MCF 10A (cell line): ENCODE measurements at regions of chr9 and their contacts with region 1.

Region 1: DNA sequence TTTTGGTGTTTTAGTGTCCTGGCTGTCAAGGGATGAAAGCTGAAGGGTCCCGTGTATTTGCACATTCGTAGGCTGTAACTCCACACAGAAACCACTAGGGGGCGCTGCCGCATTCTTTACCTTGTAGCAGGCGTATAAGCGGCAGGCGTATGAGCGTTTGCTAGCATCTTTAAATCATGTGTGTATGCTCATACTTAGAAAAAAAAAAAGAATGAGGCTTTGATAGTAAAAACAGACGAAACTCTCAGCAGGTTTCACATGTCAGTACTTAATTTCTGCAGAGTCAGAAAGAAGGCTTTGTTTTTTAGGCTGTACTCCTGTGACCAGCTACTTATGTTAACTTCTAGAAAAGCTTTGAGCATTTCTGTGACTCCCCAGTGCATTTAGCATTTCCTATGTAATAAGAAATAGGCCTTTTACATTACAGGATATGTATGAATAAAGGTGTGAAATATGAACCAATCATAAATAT is 218.8 kb upstream of the ADAMTSL1 start:
- DNase-seq: peak; percentile 87
- H3K4me3 Mint-ChIP-seq: no peak overlapping the region
- H3K27ac Mint-ChIP-seq: no peak overlapping the region
- H3K4me1 Mint-ChIP-seq: peaks cover 6% of the 10 kb centered on the region
- H3K27me3 Mint-ChIP-seq: no peaks in the 10 kb centered on the region
- CTCF ChIP-seq: peak; percentile 91

Region 2: GRCh38 chr9:17863213-17863883 is 391.8 kb before region 1 on chr9:
- CTCF ChIA-PET with region 1: no interaction called
- POLR2A ChIA-PET with region 1: no interaction called
- intact Hi-C with region 1: no loop called
- DNase-seq: no peak
- H3K4me3 Mint-ChIP-seq: no peak overlapping the region
- H3K27ac Mint-ChIP-seq: no peak overlapping the region
- H3K4me1 Mint-ChIP-seq: no peaks in the 10 kb centered on the region
- H3K27me3 Mint-ChIP-seq: no peaks in the 10 kb centered on the region
- CTCF ChIP-seq: no peak

Region 3: DNA sequence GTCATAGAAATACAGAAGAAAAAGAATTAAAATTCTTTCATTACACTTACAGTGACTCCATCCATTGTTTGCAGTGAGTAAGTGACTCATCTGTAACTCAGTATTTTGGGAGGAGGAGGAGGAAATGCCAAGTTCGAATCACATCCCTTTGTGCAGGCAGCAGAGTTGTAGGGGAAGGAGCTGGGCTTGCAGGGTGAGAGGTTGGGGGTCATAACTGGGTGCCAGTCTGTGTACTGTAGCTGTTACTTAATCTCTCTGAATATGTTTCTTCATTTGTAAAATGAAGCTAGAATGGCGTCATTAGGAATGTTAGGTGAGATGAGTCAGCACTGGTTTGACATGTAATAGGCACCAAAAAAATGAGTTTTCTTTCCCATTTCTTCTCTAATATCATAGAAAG is 16.9 kb before region 1 on chr9:
- CTCF ChIA-PET with region 1: interaction called, 10 read pairs
- POLR2A ChIA-PET with region 1: interaction called, 4 read pairs
- intact Hi-C with region 1: no loop called
- DNase-seq: peak; percentile 93
- H3K4me3 Mint-ChIP-seq: peak overlapping the region; percentile 55
- H3K27ac Mint-ChIP-seq: peak overlapping the region; percentile 88
- H3K4me1 Mint-ChIP-seq: peaks cover 33% of the 10 kb centered on the region
- H3K27me3 Mint-ChIP-seq: no peaks in the 10 kb centered on the region
- CTCF ChIP-seq: no peak

Region 4: DNA sequence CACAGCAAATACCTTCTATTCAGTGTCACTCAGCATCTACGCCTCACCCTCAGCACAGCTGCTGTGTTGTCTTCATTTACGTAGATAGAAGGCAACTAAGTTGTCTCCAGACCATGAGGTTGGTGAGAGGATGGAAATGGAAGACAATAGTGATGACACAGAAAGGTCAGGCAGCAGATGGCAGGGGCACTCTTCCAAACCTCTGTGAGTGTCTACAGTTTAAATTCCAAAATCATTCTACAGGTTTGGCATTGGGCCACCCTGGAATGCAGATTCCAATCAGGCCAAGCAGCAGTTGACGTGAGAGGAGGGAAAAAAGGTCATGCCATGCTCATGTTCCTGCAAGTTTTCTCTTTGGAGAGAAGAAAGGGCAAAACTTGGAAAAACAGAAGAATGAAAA is 150.0 kb after region 1 on chr9:
- CTCF ChIA-PET with region 1: interaction called, 16 read pairs
- POLR2A ChIA-PET with region 1: no interaction called
- intact Hi-C with region 1: no loop called
- DNase-seq: peak; percentile 61
- H3K4me3 Mint-ChIP-seq: no peak overlapping the region
- H3K27ac Mint-ChIP-seq: no peak overlapping the region
- H3K4me1 Mint-ChIP-seq: peaks cover 15% of the 10 kb centered on the region
- H3K27me3 Mint-ChIP-seq: no peaks in the 10 kb centered on the region
- CTCF ChIP-seq: peak; percentile 13

Region 5: DNA sequence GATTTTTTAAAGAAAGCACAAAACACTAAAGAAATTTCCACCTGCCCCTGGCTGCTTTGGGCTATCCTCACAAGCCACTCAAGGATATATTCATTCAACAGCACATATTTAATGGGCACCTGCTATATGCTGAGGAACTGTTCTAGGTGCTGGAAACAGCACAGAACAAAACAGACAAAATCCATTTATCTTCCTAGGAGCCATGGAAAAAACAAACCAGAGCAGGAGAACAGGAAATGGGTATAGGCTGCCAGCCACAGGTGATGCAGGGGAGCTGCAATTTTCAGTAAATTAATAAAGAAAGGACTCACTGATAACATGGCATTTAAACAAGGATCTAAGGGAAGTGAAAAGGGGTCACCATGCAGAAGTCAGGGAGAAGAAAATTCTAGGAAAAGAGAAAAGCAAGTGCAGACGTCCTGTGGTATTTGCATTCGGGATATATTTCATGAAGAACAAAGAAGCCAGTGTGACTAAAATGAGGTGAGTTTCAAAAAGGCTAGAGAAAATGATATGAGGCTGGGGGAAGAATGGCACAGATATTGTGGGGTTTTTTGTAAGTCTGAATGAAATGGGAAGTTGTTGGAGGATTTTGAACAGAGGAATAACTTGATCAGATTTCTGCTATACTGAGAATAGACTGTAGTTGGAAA is 371.0 kb after region 1 on chr9:
- CTCF ChIA-PET with region 1: interaction called, 9 read pairs
- POLR2A ChIA-PET with region 1: no interaction called
- intact Hi-C with region 1: loop called (anchors 1 kb)
- DNase-seq: peak; percentile 12
- H3K4me3 Mint-ChIP-seq: no peak overlapping the region
- H3K27ac Mint-ChIP-seq: no peak overlapping the region
- H3K4me1 Mint-ChIP-seq: no peaks in the 10 kb centered on the region
- H3K27me3 Mint-ChIP-seq: no peaks in the 10 kb centered on the region
- CTCF ChIP-seq: no peak

Region 6: GRCh38 chr9:19009391-19009965 is 754.3 kb after region 1 on chr9:
- CTCF ChIA-PET with region 1: interaction called, 15 read pairs
- POLR2A ChIA-PET with region 1: no interaction called
- intact Hi-C with region 1: loop called (anchors 2 kb)
- DNase-seq: no peak
- H3K4me3 Mint-ChIP-seq: no peak overlapping the region
- H3K27ac Mint-ChIP-seq: no peak overlapping the region
- H3K4me1 Mint-ChIP-seq: no peaks in the 10 kb centered on the region
- H3K27me3 Mint-ChIP-seq: no peaks in the 10 kb centered on the region
- CTCF ChIP-seq: no peak

Region 7: GRCh38 chr9:19028835-19029451 is 773.7 kb after region 1 on chr9:
- CTCF ChIA-PET with region 1: interaction called, 95 read pairs
- POLR2A ChIA-PET with region 1: no interaction called
- intact Hi-C with region 1: loop called (anchors 1 kb)
- DNase-seq: peak; percentile 79
- H3K4me3 Mint-ChIP-seq: no peak overlapping the region
- H3K27ac Mint-ChIP-seq: no peak overlapping the region
- H3K4me1 Mint-ChIP-seq: peaks cover 11% of the 10 kb centered on the region
- H3K27me3 Mint-ChIP-seq: peaks cover 2% of the 10 kb centered on the region
- CTCF ChIP-seq: peak; percentile 64